Activated CD4-positive, alpha-beta T cell treated with anti-CD3 and anti-CD28 coated beads, Interleukin-2, amount 10 ng/mL, durations not matched to agents 24 days and 14 days (primary cell): ENCODE measurements at regions of chr17 and their contacts with region 1.

Region 1: GRCh38 chr17:44070455-44071197 is at the start of gene G6PC3:
- DNase-seq: peak; percentile 94
- H3K4me3 Mint-ChIP-seq: peak within 1 kb of the TSS; percentile 95
- H3K27ac Mint-ChIP-seq: peak within 1 kb of the TSS; percentile 96
- H3K4me1 Mint-ChIP-seq: peaks cover 26% of the 10 kb centered on the region
- H3K27me3 Mint-ChIP-seq: no peaks in the 10 kb centered on the region
- total RNA-seq, gene G6PC3: 33.3 and 34.1 TPM in 2 replicates

Region 2: DNA sequence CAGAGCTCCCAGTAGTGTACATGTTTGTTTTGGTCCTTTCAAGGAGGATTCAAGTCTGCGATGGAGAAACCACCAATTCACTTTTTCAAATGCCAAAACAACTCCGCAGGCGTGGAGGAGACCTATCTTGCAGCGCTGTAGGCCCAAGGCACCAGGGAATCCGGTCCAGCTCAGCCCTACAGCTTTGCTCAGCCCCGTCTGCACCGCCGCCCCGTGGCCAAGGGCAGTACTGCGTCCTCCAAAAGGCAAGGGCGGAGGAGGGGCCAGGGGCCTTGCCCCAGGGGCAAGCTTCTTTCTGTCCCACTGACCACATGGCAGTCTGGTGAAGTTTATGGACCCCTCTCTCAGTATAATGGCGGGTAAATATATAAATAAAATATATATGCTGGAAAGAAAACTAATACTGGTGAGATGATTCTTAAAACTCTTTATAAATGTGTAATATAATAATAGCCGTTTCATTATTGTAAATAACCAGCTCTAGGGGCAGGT is 224.4 kb before region 1 on chr17:
- intact Hi-C with region 1: no loop called
- DNase-seq: peak; percentile 95
- H3K4me3 Mint-ChIP-seq: no peak overlapping the region
- H3K27ac Mint-ChIP-seq: no peak overlapping the region
- H3K4me1 Mint-ChIP-seq: peaks cover 3% of the 10 kb centered on the region
- H3K27me3 Mint-ChIP-seq: peaks cover 8% of the 10 kb centered on the region

Region 3: DNA sequence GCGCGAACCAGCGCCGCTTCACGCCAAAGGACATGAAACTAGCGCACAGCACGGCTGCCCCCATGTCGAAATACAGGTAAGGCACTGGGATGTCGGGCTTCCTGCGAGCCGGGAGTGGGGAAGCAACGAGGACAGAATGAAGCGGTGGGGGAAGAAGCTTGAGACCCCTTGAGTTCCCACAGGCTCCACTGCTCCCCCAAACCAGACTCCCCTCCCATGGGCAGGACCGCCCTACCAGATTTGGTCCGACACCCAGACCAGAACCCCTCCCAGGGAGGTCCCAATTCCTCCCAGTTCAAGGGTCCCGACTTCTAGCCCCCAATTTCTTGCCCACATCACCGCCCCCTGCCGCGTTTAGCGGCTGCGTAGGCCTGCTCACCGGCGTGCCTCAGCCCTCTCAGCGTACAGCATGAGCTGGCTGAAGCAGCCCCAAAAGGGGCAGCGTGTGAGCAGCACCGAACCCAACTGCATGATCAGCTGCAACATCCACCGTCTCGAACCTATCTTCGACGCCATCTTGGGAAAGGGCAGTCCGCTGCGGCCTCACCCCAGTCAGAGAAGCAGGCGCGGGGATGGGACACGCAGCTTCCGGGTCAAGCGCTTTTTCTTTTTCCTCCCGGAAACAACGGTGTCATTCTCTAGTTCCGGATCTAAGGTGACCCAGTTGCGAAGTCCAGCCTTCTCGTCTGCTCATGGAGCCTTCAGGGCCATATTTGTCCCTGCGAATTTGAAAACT is 56.0 kb before region 1 on chr17 and contains the start of gene TMEM101:
- intact Hi-C with region 1: loop called (anchors 2 kb)
- DNase-seq: peak; percentile 96
- H3K4me3 Mint-ChIP-seq: peak within 1 kb of the TSS; percentile 96
- H3K27ac Mint-ChIP-seq: peak within 1 kb of the TSS; percentile 95
- H3K4me1 Mint-ChIP-seq: peaks cover 17% of the 10 kb centered on the region
- H3K27me3 Mint-ChIP-seq: no peaks in the 10 kb centered on the region
- total RNA-seq, gene TMEM101: 27.5 and 32.8 TPM in 2 replicates

Region 4: DNA sequence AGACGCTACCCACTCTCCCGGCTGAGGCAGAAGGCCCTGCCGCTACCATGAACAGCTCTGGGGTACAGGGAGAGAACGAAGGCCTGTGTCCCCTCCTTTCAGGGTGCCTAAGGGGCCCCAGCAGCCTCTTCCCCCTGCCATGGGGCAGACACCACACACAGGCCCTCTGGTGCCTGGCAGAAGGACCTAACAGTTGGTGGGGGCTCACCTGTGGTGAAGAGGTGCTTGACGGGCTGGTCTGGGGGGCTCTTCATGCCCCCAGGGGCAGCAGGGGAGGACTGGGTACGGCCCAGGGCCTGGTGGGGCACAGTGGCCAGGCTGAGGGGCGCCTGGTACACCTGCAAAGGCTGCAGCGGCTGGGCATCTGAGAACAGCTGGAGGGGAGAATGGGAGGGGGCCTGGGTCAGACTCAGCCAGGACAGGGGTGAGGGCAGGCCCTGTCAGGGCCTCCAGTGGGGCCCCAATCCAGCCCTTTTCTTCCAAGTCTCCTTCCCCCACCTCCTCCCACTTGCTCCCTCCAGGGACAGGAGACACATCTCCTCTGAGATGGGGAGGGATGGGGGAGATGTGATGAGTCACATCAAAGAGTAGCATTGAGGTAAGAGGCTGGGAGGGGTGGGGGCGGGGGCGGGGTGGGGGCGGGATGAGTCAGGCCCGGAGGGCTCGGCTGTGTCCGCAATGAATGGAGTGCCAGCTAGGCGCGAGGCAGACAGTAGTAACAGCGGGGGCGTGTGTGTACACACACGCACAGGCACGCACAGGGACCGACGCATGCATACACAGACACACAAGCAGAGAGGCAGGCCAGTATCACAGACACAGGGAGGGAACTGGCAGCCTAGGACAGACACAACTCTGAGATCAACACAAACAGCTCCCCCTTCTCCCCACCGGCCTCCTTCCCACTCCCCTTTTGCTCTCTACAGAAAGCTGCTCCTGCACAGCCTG is 16.0 kb after region 1 on chr17:
- intact Hi-C with region 1: loop called (anchors 1 kb)
- DNase-seq: peak; percentile 70
- H3K4me3 Mint-ChIP-seq: peak overlapping the region; percentile 44
- H3K27ac Mint-ChIP-seq: peak overlapping the region; percentile 75
- H3K4me1 Mint-ChIP-seq: peaks cover 14% of the 10 kb centered on the region
- H3K27me3 Mint-ChIP-seq: no peaks in the 10 kb centered on the region

Region 5: DNA sequence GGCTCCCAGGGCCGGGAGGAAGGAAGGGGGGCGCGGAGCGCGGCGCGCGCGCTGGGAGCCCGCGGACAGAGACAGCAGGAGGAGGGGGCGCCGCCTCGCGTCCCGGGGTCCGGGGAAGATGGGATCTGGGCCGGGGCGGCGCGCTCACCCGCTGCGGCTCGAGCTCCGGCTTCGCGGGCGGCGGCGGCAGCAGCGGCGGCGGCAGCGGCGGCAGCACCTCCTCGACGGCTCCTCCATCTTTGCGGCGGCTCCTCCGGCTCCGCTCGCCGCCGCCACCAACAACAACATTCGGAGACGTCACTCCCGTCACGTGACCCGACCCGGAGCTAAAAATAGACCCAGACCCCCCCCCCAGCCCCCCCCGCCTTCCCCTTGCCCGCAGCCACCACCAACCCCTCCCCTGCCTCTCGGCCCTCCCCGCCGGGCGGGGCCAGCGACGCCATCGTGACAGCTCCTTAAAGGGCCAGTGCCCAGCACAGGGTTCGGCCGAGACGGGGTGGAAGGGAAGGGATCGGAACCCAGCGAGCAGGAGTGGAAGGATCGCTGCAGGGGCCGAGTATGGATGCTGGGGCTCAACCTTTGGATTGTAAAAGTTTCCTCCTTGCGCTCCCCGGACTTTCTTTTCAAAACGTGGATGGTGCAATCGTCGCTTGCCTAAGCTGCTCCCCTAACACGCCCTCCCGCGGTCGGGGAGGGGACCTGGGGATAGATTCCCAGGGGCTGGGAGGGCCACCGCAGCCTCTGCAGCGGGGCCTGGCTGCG is 52.9 kb after region 1 on chr17 and contains the start of gene HDAC5:
- intact Hi-C with region 1: loop called (anchors 1 kb)
- DNase-seq: peak; percentile 99
- H3K4me3 Mint-ChIP-seq: peak within 1 kb of the TSS; percentile 95
- H3K27ac Mint-ChIP-seq: peak within 1 kb of the TSS; percentile 97
- H3K4me1 Mint-ChIP-seq: peaks cover 24% of the 10 kb centered on the region
- H3K27me3 Mint-ChIP-seq: peaks cover 2% of the 10 kb centered on the region
- total RNA-seq, gene HDAC5: 16.1 and 17.7 TPM in 2 replicates

Region 6: GRCh38 chr17:44324571-44325275 is 254.1 kb after region 1 on chr17 and contains the start of gene SLC25A39:
- intact Hi-C with region 1: loop called (anchors 2 kb)
- DNase-seq: peak; percentile 99
- H3K4me3 Mint-ChIP-seq: peak within 1 kb of the TSS; percentile 94
- H3K27ac Mint-ChIP-seq: peak within 1 kb of the TSS; percentile 96
- H3K4me1 Mint-ChIP-seq: peaks cover 20% of the 10 kb centered on the region
- H3K27me3 Mint-ChIP-seq: no peaks in the 10 kb centered on the region
- total RNA-seq, gene SLC25A39: 172 TPM in 2 replicates